SK-N-SH (cell line): ENCODE measurements at regions of chr9 and their contacts with region 1.

Region 1: DNA sequence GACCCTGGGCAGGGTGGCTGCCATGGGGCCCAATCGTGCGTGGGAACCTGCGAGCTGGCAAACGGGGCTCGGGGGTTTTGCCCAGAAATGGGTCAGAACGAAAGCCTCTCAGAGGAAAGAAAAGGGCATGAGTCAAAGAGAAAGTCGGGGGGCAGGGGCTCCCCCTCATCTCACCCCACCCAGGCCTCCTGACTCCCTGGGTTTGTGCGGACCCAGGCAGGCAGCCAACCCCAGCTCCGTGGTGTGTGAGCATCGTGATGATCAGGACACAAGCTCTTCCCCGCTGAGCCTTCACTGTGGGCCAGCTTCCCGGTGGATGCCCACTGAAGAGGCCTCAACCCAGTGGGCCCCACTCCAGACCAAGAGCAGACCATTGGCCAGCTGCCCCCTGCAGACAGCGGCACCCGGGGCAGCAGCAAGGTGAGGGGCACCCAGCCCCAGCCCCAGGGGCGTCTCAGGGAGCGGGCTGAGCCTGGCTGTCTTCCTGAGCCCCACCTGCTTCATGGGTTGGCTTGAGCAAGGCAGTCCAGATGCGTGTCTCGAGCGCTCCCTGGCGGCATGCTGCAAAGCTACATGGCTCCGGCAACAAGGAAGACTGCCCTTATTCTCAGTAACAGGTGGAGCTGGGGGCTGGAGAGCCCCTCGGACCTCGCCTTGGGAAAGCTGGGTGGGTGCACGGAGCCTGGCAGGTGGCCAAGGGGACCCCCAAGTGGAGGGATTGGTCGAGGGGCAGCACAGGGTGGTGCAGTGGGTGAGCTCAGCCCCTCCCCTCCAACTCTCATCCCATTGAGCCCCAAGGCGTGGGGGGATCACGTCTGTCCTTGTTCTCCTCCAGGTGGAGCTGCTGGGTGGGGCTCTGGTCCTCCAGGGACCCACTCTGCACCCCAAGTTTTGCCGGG is 3.2 kb upstream of the FUT7 start:
- DNase-seq: peak; percentile 93
- H3K4me3 ChIP-seq: peak overlapping the region in 1 of 2 experiments; percentile 20; a peak in 1 of 4 replicates
- H3K27ac ChIP-seq: peak overlapping the region in 1 of 2 experiments; percentile 39; a peak in 1 of 4 replicates
- H3K4me1 ChIP-seq: peaks cover 0 to 21% of the 10 kb centered on the region in 2 experiments; a peak in 1 of 4 replicates
- H3K27me3 ChIP-seq: no peaks in the 10 kb centered on the region
- CTCF ChIP-seq: peak; percentile 81
- EP300 ChIP-seq: no peak
- RAD21 ChIP-seq: peak; percentile 85

Region 2: DNA sequence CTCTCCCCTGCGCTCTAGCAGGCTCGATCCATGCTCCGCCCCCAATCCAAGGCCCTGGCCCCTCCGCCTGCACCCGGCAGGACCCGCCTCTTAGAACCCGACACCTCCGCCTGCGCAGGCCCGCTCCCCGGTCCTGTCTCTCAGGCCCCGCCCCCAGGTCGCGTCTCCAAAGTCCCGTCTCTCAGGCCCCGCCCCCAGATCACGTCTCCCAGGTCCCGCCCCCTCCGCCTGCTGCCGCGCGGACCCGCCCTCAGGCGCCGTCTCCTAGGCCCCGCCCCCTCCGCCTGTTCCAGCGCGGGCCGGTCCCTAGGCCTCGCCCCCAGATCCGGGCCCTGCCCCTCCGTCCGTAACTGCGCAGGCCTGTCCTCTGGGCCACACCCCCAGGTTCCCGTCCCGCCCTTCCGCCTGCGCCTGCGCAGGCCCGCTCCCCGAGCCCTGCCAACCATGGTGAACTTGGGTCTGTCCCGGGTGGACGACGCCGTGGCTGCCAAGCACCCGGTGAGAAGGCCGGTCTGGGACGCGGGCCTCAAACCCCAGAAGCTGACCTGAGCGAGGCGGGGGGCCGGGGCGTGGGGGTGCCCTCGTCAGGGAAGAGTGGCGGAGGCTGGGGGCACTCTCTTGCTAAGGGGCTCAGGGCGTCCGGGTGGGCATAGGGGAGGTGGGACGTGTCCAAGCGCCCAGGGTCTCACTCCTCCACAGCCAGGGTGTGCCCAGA is 244.0 kb before region 1 on chr9 and contains the start of gene TMEM141:
- CTCF ChIA-PET with region 1: interaction called, 17 read pairs
- POLR2A ChIA-PET with region 1: no interaction called
- DNase-seq: peak; percentile 98
- H3K4me3 ChIP-seq: peak within 1 kb of the TSS; percentile 89 to 95
- H3K27ac ChIP-seq: peak within 1 kb of the TSS; percentile 78 to 90
- H3K4me1 ChIP-seq: peaks cover 7 to 31% of the 10 kb centered on the region in 2 experiments
- H3K27me3 ChIP-seq: no peaks in the 10 kb centered on the region
- CTCF ChIP-seq: no peak
- EP300 ChIP-seq: no peak
- RAD21 ChIP-seq: no peak
- polyA plus RNA-seq, gene TMEM141: 112 and 135 TPM in 2 replicates

Region 3: GRCh38 chr9:136949817-136950655 is 85.1 kb before region 1 on chr9:
- CTCF ChIA-PET with region 1: interaction called, 350 read pairs
- POLR2A ChIA-PET with region 1: interaction called, 13 read pairs
- DNase-seq: peak; percentile 100
- H3K4me3 ChIP-seq: peak overlapping the region; percentile 62 to 67
- H3K27ac ChIP-seq: peak overlapping the region in 1 of 2 experiments; percentile 94; a peak in 2 of 4 replicates
- H3K4me1 ChIP-seq: peaks cover 0 to 30% of the 10 kb centered on the region in 2 experiments; a peak in 2 of 4 replicates
- H3K27me3 ChIP-seq: no peaks in the 10 kb centered on the region
- CTCF ChIP-seq: no peak
- EP300 ChIP-seq: no peak
- RAD21 ChIP-seq: no peak

Region 4: DNA sequence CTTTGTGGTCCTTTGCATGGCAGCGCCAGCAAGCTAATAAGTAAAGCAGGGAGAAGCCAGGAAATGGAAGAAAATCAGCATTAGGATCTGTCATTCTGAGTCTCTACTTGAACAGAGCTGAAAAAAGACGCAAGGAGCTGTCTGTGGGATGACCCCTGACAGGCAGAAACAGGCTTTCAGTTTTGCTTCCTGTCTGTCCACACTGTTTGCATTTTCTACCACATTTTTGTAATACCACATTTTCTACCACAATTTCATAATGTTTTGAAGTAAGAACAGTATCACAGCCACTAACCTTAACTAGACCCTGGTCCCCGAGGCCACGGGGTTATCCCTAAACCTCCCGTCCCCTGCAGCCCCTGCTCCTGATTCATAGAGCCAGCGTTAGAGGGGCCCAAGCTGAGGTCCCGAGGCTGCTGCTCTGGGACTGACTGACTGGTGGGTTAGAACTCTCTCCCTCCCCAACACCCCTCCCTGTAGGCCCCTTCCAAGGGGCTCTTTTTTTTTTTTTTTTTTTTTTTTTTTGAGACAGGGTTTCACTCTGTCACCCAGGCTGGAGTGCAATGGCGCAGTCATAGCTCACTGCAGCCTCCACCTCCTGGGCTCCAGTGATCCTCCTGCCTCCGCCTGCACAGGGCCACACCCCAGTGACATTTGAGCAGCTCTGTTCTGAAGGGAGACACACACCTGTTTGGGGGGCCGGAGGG is 34.8 kb before region 1 on chr9:
- CTCF ChIA-PET with region 1: interaction called, 68 read pairs
- POLR2A ChIA-PET with region 1: no interaction called
- DNase-seq: no peak
- H3K4me3 ChIP-seq: no peak overlapping the region
- H3K27ac ChIP-seq: no peak overlapping the region
- H3K4me1 ChIP-seq: peaks cover 9 to 13% of the 10 kb centered on the region in 2 experiments; a peak in 3 of 4 replicates
- H3K27me3 ChIP-seq: no peaks in the 10 kb centered on the region
- CTCF ChIP-seq: no peak
- EP300 ChIP-seq: no peak
- RAD21 ChIP-seq: no peak

Region 5: GRCh38 chr9:137046098-137046787 is 11.1 kb after region 1 on chr9 and contains the start of gene NPDC1:
- CTCF ChIA-PET with region 1: interaction called, 129 read pairs
- POLR2A ChIA-PET with region 1: interaction called, 8 read pairs
- DNase-seq: peak; percentile 96
- H3K4me3 ChIP-seq: peak within 1 kb of the TSS; percentile 62 to 73
- H3K27ac ChIP-seq: peak within 1 kb of the TSS in 1 of 2 experiments; percentile 78; a peak in 2 of 4 replicates
- H3K4me1 ChIP-seq: peaks cover 11 to 25% of the 10 kb centered on the region in 2 experiments; a peak in 2 of 4 replicates
- H3K27me3 ChIP-seq: 0 out of 2 replicates have a peak, but pooled peaks cover 5% of the 10 kb centered on the region
- CTCF ChIP-seq: peak; percentile 87
- EP300 ChIP-seq: no peak
- RAD21 ChIP-seq: peak; percentile 75
- polyA plus RNA-seq, gene NPDC1: 47.4 and 48.1 TPM in 2 replicates

Region 6: DNA sequence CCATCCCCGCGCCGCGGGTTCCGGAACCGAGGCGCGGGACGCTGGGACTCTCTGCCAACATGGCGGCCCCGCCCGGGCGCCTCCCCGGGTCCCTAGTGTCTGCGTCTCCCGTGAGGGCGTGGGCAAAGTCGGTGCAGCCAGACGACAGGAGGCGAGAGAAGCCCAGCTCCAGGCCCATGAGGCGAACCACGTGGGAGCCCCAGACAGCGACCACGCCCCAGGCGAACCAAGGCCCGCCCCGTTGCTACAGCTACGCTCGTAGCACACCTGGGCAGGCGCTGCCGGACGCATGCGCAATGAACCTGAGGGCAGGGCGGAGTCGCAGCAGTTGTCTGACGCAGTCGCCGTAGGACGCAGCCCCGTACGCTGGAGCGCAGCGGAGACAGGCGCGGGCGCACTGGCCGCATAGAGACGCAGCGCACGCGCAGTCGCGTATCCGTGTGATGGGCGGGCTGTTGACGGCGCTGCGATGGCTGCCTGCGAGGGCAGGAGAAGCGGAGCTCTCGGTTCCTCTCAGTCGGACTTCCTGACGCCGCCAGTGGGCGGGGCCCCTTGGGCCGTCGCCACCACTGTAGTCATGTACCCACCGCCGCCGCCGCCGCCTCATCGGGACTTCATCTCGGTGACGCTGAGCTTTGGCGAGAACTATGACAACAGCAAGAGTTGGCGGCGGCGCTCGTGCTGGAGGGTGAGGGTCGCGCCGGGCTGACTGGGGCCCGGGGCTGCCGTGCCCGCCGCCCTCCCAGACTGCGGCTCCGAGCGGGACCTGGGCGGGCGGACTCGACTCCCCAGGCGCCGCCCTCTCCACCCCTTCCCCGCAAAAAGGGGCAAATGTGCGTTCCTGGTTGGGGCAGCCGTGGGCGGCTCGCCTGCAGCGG is 51.7 kb after region 1 on chr9 and contains the start of gene MAN1B1:
- CTCF ChIA-PET with region 1: interaction called, 11 read pairs
- POLR2A ChIA-PET with region 1: no interaction called
- DNase-seq: peak; percentile 98
- H3K4me3 ChIP-seq: peak within 1 kb of the TSS; percentile 80 to 93
- H3K27ac ChIP-seq: peak within 1 kb of the TSS; percentile 57 to 88
- H3K4me1 ChIP-seq: peaks cover 13 to 21% of the 10 kb centered on the region in 2 experiments
- H3K27me3 ChIP-seq: no peaks in the 10 kb centered on the region
- CTCF ChIP-seq: no peak
- EP300 ChIP-seq: no peak
- RAD21 ChIP-seq: no peak
- polyA plus RNA-seq, gene MAN1B1: 57.8 and 61.9 TPM in 2 replicates